Dendritic cell treated with granulocyte-macrophage colony-stimulating factor and Interleukin-4, amounts not matched to agents 40 ng/mL and 50 ng/mL, for 4 days (primary cell): ENCODE measurements at regions of chr7 and their contacts with region 1.

Region 1: GRCh38 chr7:114865564-114865963 is 56.3 kb upstream of the MDFIC start:
- H3K4me3 Mint-ChIP-seq: no peak overlapping the region
- H3K27ac Mint-ChIP-seq: no peak overlapping the region
- H3K4me1 Mint-ChIP-seq: no peaks in the 10 kb centered on the region
- H3K27me3 Mint-ChIP-seq: no peaks in the 10 kb centered on the region

Region 2: DNA sequence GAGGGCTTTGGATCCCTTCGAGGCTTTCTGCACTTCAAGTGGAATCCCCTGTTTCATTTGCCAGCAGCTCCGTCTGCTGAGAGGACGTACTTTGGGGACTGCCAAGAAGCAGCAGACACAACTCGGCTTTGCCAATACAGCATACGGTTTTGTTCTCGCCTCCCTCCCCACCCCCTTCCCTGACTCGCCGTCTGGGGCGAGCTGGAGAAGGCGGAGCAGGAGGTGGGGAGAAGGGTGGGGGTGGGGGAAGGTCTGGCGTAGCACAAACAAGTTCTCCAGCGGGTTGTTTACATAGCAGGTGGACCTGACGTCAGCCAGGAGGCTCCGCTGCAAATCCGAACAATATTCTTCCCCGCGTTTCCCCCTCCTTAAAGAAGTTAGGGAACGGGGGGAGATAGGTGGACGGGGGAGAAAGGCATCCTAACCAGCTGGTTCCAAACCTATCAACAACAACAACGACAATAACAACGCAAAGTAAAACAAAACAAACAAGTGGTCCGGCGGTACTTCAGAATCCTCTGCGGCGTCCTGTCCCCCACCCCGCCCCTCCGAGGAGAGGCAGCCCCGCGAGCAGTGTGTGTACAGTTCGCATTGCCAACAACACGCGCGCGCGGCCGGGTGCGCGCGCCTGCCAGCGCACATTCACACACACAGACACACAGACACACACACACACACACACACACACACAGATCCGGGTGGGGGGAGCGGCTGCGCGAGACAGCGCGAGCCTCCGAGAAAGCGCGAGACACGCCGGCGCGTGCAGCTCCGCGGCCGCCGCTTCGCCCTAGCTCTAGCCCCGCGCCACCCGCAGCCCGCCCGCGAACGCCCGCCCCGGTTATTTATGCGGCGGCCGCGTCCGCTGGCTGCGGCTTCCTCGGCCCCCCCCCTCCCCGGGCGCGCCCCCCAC is 779.7 kb before region 1 on chr7:
- intact Hi-C with region 1: loop called (anchors 10 kb)
- H3K4me3 Mint-ChIP-seq: peak overlapping the region; percentile 87
- H3K27ac Mint-ChIP-seq: peak overlapping the region; percentile 58
- H3K4me1 Mint-ChIP-seq: peaks cover 54% of the 10 kb centered on the region
- H3K27me3 Mint-ChIP-seq: peaks cover 83% of the 10 kb centered on the region

Region 3: GRCh38 chr7:114723308-114723707 is 142.3 kb before region 1 on chr7:
- intact Hi-C with region 1: no loop called
- H3K4me3 Mint-ChIP-seq: no peak overlapping the region
- H3K27ac Mint-ChIP-seq: no peak overlapping the region
- H3K4me1 Mint-ChIP-seq: no peaks in the 10 kb centered on the region
- H3K27me3 Mint-ChIP-seq: no peaks in the 10 kb centered on the region

Region 4: DNA sequence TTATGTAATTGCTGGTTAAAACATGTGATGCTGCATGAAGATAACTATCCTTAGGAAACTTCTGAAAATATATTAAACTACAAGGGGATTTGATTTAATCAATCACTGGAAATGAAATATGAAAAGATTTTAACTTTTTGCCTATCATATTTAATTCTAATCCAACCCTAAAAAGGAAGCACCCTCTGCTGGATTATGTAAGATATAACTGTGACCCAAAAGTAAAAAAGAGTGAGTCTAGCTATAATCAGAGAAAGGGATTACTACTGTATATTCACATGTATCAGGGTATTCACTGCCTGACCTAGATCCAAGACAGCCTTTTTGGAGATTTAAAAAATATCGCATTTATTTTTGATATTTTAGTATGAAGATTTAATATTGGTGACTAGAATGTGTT is 351.8 kb after region 1 on chr7:
- intact Hi-C with region 1: loop called (anchors 2 kb)
- H3K4me3 Mint-ChIP-seq: no peak overlapping the region
- H3K27ac Mint-ChIP-seq: no peak overlapping the region
- H3K4me1 Mint-ChIP-seq: no peaks in the 10 kb centered on the region
- H3K27me3 Mint-ChIP-seq: no peaks in the 10 kb centered on the region

Region 5: DNA sequence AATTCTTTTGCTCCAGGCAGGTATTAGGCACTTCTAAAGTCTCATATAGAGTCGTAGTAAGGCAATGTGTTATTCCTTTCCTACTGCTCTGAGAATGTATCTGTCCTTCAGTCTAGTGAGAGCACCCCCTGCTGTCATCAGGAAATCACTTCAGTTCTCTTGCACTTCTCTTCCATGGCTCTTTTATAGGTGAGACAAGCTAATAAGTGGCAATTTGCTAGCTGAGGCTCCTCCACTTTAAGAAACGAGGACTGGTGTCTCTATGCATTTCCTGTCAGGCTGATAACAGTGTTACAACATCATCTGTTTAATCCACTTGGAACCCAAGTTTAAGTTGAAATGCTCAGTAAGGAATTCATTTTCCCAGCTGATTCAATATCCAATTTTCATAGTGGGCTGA is 814.4 kb after region 1 on chr7:
- intact Hi-C with region 1: loop called (anchors 5 kb)
- H3K4me3 Mint-ChIP-seq: no peak overlapping the region
- H3K27ac Mint-ChIP-seq: no peak overlapping the region
- H3K4me1 Mint-ChIP-seq: no peaks in the 10 kb centered on the region
- H3K27me3 Mint-ChIP-seq: no peaks in the 10 kb centered on the region

Region 6: DNA sequence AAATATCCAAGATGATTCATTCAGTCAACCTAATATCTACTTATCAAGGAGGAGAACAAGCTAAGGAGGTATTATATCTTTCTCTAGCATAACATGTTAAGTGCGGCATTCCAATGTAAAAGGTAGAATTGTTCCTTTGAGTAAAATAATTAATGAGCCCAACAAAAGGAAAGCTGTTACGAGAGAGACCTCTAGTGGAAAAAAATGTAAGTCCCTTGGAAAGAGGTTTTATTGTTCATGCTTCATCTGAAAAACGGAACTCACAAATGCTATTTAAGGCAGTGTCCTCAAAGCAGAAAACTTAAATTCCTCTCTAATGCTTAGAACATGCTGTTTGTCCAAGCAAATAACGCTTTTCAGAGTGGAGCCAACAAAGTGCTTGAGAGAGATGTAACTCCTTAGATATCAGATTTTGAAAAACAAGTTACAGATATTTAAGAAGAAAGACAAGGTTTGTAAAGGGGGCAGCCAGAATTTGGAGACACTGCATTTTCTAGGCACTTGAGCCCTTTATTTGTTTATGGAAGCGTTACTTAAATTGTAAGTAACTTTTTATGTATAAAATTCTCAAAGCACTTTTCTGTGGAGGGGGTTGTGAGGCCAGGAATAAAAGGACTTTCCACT is 1045.1 kb after region 1 on chr7:
- intact Hi-C with region 1: loop called (anchors 1 kb)
- H3K4me3 Mint-ChIP-seq: no peak overlapping the region
- H3K27ac Mint-ChIP-seq: no peak overlapping the region
- H3K4me1 Mint-ChIP-seq: no peaks in the 10 kb centered on the region
- H3K27me3 Mint-ChIP-seq: peaks cover 2% of the 10 kb centered on the region